Activated naive CD4-positive, alpha-beta T cell treated with anti-CD3 and anti-CD28 coated beads for 36 hours (primary cell): ENCODE measurements at regions of chr16 and their contacts with region 1.

Region 1: DNA sequence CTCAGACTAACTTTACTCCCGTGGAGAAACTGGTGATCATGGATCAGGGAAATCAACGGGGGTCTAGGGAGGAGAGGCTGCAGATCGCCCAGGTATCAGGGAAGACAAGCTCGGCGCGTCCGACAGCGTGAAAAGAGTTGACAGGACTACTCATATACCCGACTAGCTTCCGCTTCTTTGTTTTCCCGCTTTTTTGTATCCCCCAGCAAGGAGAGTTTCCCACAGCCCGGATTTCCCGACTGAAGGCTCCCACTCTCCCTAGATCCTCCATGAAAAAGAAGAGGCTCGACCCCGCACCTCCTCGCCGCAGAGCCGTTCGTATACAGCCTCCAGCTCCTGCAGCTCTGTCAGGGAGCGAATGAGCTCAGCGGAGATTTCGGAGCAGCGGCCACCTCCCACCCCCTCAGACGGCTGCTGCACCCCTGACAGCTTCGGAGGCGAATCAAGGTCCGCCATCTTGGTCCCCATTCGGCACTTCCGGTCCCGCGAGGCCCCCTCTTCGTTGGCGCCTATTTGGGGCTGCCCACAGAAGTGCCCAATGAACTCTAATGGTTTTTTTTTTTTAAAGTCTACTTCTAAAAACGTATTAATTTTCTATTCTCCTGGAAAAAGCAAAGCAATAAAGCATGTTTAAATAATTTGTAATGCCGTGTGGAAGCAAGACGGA is at the start of gene COG4:
- DNase-seq: peak; percentile 96
- H3K4me3 Mint-ChIP-seq: peak within 1 kb of the TSS; percentile 94
- H3K27ac Mint-ChIP-seq: peak within 1 kb of the TSS; percentile 99
- H3K4me1 Mint-ChIP-seq: peaks cover 46% of the 10 kb centered on the region
- H3K27me3 Mint-ChIP-seq: no peaks in the 10 kb centered on the region
- total RNA-seq, gene COG4: 42.0 to 48.7 TPM

Region 2: GRCh38 chr16:70289229-70290098 is 233.7 kb before region 1 on chr16 and contains the start of gene AARS1:
- CTCF ChIA-PET with region 1: no interaction called
- intact Hi-C with region 1: loop called (anchors 1 kb)
- DNase-seq: peak; percentile 98
- H3K4me3 Mint-ChIP-seq: peak within 1 kb of the TSS; percentile 99
- H3K27ac Mint-ChIP-seq: peak within 1 kb of the TSS; percentile 99
- H3K4me1 Mint-ChIP-seq: peaks cover 34% of the 10 kb centered on the region
- H3K27me3 Mint-ChIP-seq: no peaks in the 10 kb centered on the region
- total RNA-seq, gene AARS1: 237 to 238 TPM

Region 3: GRCh38 chr16:70380861-70381603 is 142.2 kb before region 1 on chr16:
- CTCF ChIA-PET with region 1: interaction called, 5 read pairs
- intact Hi-C with region 1: loop called (anchors 1 kb)
- DNase-seq: peak; percentile 98
- H3K4me3 Mint-ChIP-seq: peak overlapping the region; percentile 98
- H3K27ac Mint-ChIP-seq: peak overlapping the region; percentile 94
- H3K4me1 Mint-ChIP-seq: peaks cover 15% of the 10 kb centered on the region
- H3K27me3 Mint-ChIP-seq: no peaks in the 10 kb centered on the region

Region 4: DNA sequence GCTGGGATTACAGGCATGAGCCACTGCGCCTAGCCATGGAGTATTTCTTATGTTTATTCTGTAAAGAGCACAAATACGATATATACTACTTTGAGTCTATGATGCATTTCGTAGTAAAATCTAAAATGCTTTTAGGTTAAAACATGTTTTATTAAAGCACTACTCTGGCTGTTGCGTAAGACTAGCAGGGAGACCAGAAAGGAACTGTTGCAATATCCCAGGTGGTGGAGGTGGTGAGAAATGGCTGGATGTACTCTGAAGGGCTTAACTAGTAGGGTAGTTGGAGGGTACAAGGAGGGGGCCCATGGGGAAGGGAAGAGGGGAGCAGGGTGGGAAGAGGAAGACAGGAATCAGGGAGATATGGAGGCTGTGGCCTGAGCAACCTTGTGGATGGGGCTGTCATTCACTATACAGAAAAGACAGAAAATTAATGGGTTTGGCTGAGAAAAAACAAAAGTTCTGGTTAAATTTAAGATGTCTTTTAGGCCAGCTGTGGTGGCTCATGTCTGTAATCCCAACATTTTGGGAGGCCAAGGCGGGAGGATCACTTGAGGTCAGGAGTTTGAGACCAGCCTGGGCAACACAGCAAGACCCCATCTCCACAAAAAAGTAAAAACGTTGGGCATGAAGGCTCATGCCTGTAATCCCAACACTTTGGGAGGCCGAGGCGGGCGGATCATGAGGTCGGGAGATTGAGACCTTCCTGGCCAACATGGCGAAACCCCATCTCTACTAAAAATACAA is 120.1 kb before region 1 on chr16:
- CTCF ChIA-PET with region 1: no interaction called
- intact Hi-C with region 1: loop called (anchors 2 kb)
- DNase-seq: no peak
- H3K4me3 Mint-ChIP-seq: no peak overlapping the region
- H3K27ac Mint-ChIP-seq: peak overlapping the region; percentile 25
- H3K4me1 Mint-ChIP-seq: peaks cover 46% of the 10 kb centered on the region
- H3K27me3 Mint-ChIP-seq: no peaks in the 10 kb centered on the region

Region 5: DNA sequence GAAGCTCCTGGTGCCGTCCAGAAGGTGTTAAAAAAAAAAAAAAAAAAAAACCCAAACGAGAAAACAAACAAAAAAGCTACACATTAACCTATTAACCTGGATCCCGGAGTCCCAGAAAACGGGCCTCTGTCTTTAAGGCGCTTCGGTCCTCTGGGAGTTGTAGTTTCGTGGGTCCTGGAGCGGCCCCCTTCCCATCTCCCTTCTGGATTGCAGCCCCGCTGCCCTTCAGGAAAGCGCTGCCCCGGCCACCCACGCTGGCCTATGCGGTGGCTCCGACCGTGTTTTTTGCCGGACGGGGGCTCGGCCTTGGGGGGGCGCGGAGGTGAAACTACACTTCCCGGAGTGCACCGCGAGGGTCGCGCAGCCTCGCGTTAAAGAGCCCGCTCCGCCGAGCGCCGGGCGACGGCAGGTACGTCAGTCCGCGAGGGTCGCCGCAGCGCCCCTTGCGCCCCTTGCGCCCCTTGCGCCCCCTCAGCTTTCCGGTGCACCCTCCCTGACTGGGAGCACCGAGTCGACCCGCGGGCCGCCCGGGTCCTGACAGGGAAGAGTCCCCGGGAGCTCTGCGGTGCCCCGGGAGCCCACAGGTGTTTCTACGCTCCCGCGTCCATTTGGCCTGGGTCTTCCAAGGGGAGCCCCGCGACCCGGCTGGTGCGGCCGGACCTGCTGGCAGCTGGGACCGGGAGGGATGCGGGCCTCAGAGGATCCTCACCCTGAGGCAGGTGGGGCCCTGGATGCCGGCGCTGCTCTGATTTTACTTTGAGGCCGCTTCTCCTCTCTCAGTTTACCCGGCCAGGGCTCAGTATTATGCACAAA is 68.8 kb before region 1 on chr16 and contains the start of gene FCSK:
- CTCF ChIA-PET with region 1: interaction called, 4 read pairs
- intact Hi-C with region 1: loop called (anchors 2 kb)
- DNase-seq: peak; percentile 62
- H3K4me3 Mint-ChIP-seq: peak within 1 kb of the TSS; percentile 86
- H3K27ac Mint-ChIP-seq: peak within 1 kb of the TSS; percentile 88
- H3K4me1 Mint-ChIP-seq: peaks cover 18% of the 10 kb centered on the region
- H3K27me3 Mint-ChIP-seq: no peaks in the 10 kb centered on the region
- total RNA-seq, gene FCSK: 12.2 to 12.6 TPM

Region 6: GRCh38 chr16:70490261-70490803 is 32.9 kb before region 1 on chr16:
- CTCF ChIA-PET with region 1: no interaction called
- intact Hi-C with region 1: no loop called
- DNase-seq: no peak
- H3K4me3 Mint-ChIP-seq: no peak overlapping the region
- H3K27ac Mint-ChIP-seq: no peak overlapping the region
- H3K4me1 Mint-ChIP-seq: peaks cover 8% of the 10 kb centered on the region
- H3K27me3 Mint-ChIP-seq: no peaks in the 10 kb centered on the region

Region 7: DNA sequence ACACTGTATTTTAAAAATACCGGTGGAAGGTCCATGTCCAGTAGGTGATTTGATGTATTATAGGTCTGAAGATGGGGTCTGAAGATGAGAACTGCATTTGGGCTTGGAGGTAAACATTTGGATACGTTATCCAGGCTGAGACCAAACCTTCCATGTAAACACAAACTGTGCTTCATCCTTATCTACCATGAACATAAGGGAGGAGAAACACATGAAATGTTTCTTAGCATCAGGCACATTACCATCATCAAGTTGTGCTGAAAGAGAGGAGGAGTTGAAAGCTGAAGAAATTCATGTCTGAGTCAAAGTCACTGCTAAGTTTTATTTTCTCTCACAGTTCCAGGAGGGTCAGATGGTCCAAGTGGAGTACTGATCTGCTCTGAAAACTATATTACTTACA is 11.8 kb after region 1 on chr16:
- CTCF ChIA-PET with region 1: no interaction called
- intact Hi-C with region 1: no loop called
- DNase-seq: no peak
- H3K4me3 Mint-ChIP-seq: no peak overlapping the region
- H3K27ac Mint-ChIP-seq: peak overlapping the region; percentile 11
- H3K4me1 Mint-ChIP-seq: peaks cover 33% of the 10 kb centered on the region
- H3K27me3 Mint-ChIP-seq: no peaks in the 10 kb centered on the region

Region 8: GRCh38 chr16:70582290-70582978 is 59.2 kb after region 1 on chr16:
- CTCF ChIA-PET with region 1: no interaction called
- intact Hi-C with region 1: no loop called
- DNase-seq: peak; percentile 40
- H3K4me3 Mint-ChIP-seq: no peak overlapping the region
- H3K27ac Mint-ChIP-seq: no peak overlapping the region
- H3K4me1 Mint-ChIP-seq: no peaks in the 10 kb centered on the region
- H3K27me3 Mint-ChIP-seq: no peaks in the 10 kb centered on the region

Region 9: GRCh38 chr16:70737377-70738082 is 214.3 kb after region 1 on chr16:
- CTCF ChIA-PET with region 1: no interaction called
- intact Hi-C with region 1: loop called (anchors 2 kb)
- DNase-seq: peak; percentile 87
- H3K4me3 Mint-ChIP-seq: peak overlapping the region; percentile 55
- H3K27ac Mint-ChIP-seq: peak overlapping the region; percentile 93
- H3K4me1 Mint-ChIP-seq: peaks cover 66% of the 10 kb centered on the region
- H3K27me3 Mint-ChIP-seq: no peaks in the 10 kb centered on the region